ENCODE measurements at regions of chr12 and their contacts with region 1.

Region 1: DNA sequence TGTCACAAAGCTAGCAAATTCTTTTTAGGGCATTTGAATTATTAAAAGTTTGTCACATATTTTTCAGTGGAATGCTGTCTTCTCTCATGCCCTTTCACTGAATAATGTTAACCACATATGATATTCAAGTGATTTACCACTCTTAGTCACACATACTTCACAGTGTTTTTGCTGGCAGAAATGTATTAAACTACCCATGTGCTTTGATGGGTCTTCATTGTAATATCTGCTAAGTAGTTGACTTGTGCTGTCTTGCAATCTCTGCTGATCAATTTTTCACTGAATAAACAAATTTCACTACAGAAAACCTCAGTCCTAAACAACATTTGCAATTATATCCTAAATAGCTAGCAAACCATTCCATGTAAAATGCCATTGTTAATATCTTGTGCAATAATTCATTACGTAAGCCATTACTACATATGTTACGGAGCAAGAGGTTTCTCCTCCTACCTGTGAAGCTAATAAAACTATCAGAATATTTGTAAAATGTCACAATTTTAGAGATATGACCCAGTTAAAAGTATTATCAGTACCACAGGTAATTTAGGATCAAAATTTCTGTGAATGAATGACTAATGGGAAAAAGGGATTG is 64.6 kb upstream of the LMO3 start:
- DNase-seq: no peak
- ATAC-seq: no peak
- H3K4me3 ChIP-seq: no peak overlapping the region
- H3K27ac ChIP-seq: no peak overlapping the region
- H3K4me1 ChIP-seq: no peaks in the 10 kb centered on the region
- H3K27me3 ChIP-seq: no peaks in the 10 kb centered on the region
- CTCF ChIP-seq: no peak
- EP300 ChIP-seq: no peak
- POLR2A ChIP-seq: no peak
- RAD21 ChIP-seq: no peak

Region 2: DNA sequence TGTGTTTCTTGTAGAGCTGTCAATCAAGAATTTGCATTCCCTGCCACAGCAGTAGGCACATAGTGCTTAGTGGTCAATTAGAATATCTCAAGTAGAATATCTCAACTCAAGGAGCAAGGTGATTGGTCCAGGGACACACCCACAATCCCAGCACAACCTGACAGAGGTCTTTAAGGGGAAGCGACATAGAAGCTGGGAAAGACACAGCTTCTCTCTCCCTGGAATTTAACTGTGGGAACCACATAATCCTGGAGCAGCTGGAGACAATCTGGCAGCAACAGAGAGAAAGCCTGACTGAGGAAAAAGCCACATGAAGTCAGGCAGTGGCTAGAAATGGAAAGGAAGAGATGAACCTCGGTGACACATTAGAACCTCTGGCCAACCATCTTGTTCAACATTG is 21.1 kb after region 1 on chr12:
- CTCF ChIA-PET with region 1: no interaction called
- POLR2A ChIA-PET with region 1: no interaction called
- RAD21 ChIA-PET with region 1: no interaction called
- SMC1A ChIA-PET with region 1: interaction called, 5 read pairs
- in situ Hi-C with region 1: no loop called
- intact Hi-C with region 1: loop called (anchors 2 kb)
- DNase-seq: no peak
- ATAC-seq: no peak
- H3K4me3 ChIP-seq: no peak overlapping the region
- H3K27ac ChIP-seq: no peak overlapping the region
- H3K4me1 ChIP-seq: no peaks in the 10 kb centered on the region
- H3K27me3 ChIP-seq: no peaks in the 10 kb centered on the region
- CTCF ChIP-seq: no peak
- EP300 ChIP-seq: no peak
- POLR2A ChIP-seq: no peak
- RAD21 ChIP-seq: no peak